ENCODE measurements at regions of chr1 and their contacts with region 1.

Region 1: GRCh38 chr1:67760030-67760821 is 73.0 kb downstream of the GNG12 start:
- DNase-seq: no peak
- H3K4me3 ChIP-seq: no peak overlapping the region
- H3K27ac ChIP-seq: peak overlapping the region; percentile 49
- H3K27me3 ChIP-seq: no peaks in the 10 kb centered on the region
- CTCF ChIP-seq: peak; percentile 88

Region 2: GRCh38 chr1:67524143-67525052 is 235.8 kb before region 1 on chr1:
- CTCF ChIA-PET with region 1: interaction called, 21 read pairs
- POLR2A ChIA-PET with region 1: no interaction called
- DNase-seq: no peak
- H3K4me3 ChIP-seq: no peak overlapping the region
- H3K27ac ChIP-seq: no peak overlapping the region
- H3K27me3 ChIP-seq: peaks cover 2% of the 10 kb centered on the region
- CTCF ChIP-seq: peak; percentile 20; the same call in 1 of the 2 replicates

Region 3: GRCh38 chr1:67552336-67552759 is 207.9 kb before region 1 on chr1:
- CTCF ChIA-PET with region 1: interaction called, 29 read pairs
- POLR2A ChIA-PET with region 1: no interaction called
- DNase-seq: no peak
- H3K4me3 ChIP-seq: no peak overlapping the region
- H3K27ac ChIP-seq: no peak overlapping the region
- H3K27me3 ChIP-seq: no peaks in the 10 kb centered on the region
- CTCF ChIP-seq: 0 out of 2 replicates have a peak, but pooled peaks have one; percentile 3

Region 4: DNA sequence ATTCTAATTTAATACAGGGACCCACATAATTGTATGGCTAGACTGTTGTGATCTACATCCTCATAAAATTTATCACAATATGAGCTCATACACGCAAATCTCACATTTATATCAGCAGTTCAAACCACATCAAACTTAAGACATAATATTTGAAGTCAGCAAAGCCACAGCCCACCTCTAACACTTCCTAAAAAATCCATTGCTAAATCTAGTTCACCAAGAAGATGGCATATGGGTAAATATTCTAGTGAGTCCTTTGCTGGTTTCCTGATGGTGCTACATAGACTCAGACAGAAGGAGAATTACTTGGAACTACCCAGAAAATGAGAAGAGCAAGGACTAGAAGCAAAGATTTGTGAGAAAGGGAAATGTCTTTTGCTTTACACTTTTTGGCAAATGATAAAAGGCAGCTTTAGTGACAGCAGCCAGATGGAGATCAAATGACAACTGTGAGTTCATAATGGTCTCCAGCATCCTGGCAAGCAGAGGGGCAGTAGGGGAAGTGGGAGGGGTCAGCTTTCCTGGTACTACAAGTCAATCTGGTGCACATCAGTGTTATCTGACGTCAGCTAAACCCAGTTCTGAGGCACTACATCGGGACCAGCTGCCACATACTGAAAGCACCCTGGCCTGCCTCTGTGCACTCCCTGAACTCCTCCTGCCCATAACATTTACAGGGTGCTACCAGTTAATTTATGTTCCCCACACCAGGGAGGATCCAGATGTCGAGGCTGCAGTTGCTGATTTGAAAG is 85.8 kb before region 1 on chr1:
- CTCF ChIA-PET with region 1: interaction called, 14 read pairs
- POLR2A ChIA-PET with region 1: no interaction called
- DNase-seq: no peak
- H3K4me3 ChIP-seq: no peak overlapping the region
- H3K27ac ChIP-seq: no peak overlapping the region
- H3K27me3 ChIP-seq: no peaks in the 10 kb centered on the region
- CTCF ChIP-seq: no peak

Region 5: DNA sequence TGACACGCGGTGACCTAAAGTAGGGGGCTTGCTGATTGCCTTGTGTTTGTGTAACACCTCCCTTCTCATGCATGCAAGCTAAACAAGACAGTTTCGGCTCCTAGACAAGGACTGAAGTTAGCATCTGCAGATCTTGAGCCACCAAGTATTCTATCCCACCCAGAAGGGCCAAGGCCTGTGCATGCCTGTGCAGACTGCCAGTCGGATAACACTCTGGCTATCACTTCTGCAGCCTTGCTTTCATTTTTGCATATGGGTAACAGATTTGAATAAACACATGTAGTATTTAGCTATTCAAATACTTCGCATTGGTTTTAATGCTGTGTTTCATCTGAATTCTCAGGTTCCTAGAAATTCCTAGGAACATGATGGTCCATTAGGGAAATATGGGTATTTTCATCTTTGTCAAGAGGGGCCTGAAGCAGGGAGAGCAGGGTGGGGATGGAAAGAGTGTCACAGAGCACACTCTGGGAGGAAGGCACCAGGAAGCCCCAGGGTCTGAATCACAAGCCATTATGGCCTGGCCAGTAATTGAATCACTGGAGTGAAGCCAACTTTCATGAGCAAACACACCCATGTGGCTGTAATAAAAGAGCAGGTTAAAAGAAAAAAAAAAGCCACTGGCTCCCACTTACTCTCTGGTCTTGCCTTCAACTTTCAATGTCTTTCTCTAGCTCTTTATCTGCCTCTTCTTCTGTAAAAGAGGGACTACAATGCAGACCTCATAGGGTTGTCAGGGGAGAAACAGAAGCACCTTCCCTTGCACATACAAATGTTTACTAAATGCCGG is 47.0 kb before region 1 on chr1:
- CTCF ChIA-PET with region 1: interaction called, 17 read pairs
- POLR2A ChIA-PET with region 1: no interaction called
- DNase-seq: peak; percentile 37
- H3K4me3 ChIP-seq: no peak overlapping the region
- H3K27ac ChIP-seq: no peak overlapping the region
- H3K27me3 ChIP-seq: no peaks in the 10 kb centered on the region
- CTCF ChIP-seq: no peak

Region 6: GRCh38 chr1:67785847-67786753 is 25.9 kb after region 1 on chr1:
- CTCF ChIA-PET with region 1: interaction called, 29 read pairs
- POLR2A ChIA-PET with region 1: no interaction called
- DNase-seq: no peak
- H3K4me3 ChIP-seq: no peak overlapping the region
- H3K27ac ChIP-seq: no peak overlapping the region
- H3K27me3 ChIP-seq: no peaks in the 10 kb centered on the region
- CTCF ChIP-seq: no peak

Region 7: DNA sequence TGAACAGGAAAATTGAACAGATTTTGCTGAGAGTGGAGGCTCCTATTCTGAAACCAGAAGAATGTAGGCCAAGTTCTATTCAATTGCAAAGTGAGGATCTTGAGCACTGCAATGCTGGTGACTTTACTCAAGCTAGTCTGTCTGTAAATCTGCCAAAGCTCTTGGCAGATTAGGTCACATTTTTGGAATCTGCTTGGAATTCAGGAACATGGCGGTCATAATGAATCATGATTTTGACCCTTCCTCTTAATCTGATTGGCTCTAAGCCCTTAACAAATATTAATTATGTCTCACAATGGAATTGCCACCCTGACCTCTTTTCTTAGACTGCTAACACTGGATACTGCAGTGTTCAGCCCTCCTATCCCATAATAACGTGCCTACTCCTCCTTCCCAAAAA is 80.2 kb after region 1 on chr1:
- CTCF ChIA-PET with region 1: interaction called, 28 read pairs
- POLR2A ChIA-PET with region 1: no interaction called
- DNase-seq: peak; percentile 69
- H3K4me3 ChIP-seq: no peak overlapping the region
- H3K27ac ChIP-seq: peak overlapping the region; percentile 22
- H3K27me3 ChIP-seq: no peaks in the 10 kb centered on the region
- CTCF ChIP-seq: no peak

Region 8: DNA sequence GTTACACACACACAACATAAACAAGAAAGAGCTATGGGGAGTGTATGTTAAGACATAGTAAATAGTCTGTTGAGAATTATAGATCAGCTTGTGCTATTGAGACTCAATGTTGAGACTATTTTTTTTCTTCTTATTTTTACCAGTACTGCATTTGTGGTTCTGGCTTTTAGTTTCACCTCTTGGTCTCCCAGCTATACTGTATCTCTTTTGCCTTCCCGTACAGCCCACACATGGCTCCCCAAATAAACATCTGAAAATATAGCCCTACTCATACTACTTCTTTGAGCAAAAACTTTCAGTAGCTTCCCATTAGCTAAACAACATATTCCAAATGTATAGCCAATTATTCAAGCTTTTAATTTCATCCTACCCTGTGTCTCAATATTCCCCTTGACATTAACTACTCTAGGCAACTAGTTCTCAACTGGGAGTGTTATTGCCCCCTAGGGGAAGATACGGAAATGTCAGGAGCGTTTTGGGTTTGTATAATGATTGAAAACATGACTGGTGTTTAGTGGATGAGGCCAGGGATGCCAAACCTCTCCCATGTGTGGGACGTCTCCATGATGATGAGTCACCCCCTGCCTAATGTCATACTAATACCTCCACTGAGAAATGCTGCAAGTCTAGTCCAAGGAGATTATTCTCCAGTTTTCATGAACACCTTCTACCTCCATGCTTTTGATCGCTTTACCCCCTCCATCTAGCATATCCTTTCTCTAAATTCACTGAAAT is 682.8 kb after region 1 on chr1:
- CTCF ChIA-PET with region 1: no interaction called
- POLR2A ChIA-PET with region 1: no interaction called
- DNase-seq: peak; percentile 36
- H3K4me3 ChIP-seq: no peak overlapping the region
- H3K27ac ChIP-seq: no peak overlapping the region
- H3K27me3 ChIP-seq: no peaks in the 10 kb centered on the region
- CTCF ChIP-seq: peak; percentile 81